ENCODE measurements at regions of chr4 and their contacts with region 1.

Region 1: GRCh38 chr4:137524725-137525369 is 7.4 kb downstream of the PCDH18 start:
- DNase-seq: no peak
- ATAC-seq: no peak

Region 2: GRCh38 chr4:137156054-137156453 is 368.8 kb before region 1 on chr4:
- intact Hi-C with region 1: no loop called
- DNase-seq: no peak
- ATAC-seq: no peak

Region 3: GRCh38 chr4:137293281-137293680 is 231.6 kb before region 1 on chr4:
- intact Hi-C with region 1: loop called (anchors 5 kb)
- DNase-seq: no peak
- ATAC-seq: no peak

Region 4: GRCh38 chr4:137705171-137705783 is 180.4 kb after region 1 on chr4:
- intact Hi-C with region 1: loop called (anchors 10 kb)
- DNase-seq: no peak
- ATAC-seq: peak; percentile 89

Measured in Right ventricle myocardium inferior (tissue), 1 donor.